ENCODE measurements at regions of chr7 and their contacts with region 1.

Region 1: DNA sequence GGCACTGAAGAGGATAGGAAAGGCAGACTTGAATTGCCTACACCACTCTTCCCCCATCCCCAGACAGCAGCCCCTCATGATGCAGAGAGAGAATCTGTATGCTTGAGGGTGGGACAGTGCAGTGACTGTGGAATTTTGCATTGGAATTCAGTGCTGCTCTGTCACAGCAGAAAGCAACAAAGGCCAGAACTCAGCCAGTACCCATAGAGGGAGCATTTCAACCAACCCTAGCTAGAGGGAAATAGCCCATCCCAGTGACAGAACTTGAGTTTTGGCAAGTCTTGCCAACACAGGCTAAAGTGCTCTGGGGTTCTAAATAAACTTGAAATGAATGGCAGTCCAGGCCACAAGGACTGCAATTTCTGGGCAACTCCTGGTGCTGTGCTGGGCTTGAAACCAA is 80.4 kb downstream of the TES start:
- DNase-seq: no peak
- ATAC-seq: no peak

Region 2: GRCh38 chr7:116218051-116218645 is 72.6 kb before region 1 on chr7:
- intact Hi-C with region 1: no loop called
- DNase-seq: no peak
- ATAC-seq: peak in 1 of 2 donors; percentile 26

Region 3: GRCh38 chr7:116236020-116236630 is 54.6 kb before region 1 on chr7:
- intact Hi-C with region 1: no loop called
- DNase-seq: peak; percentile 48
- ATAC-seq: peak; percentile 63

Region 4: GRCh38 chr7:116305485-116306408 is 15.0 kb after region 1 on chr7:
- intact Hi-C with region 1: loop called in 1 of 2 experiments (anchors 1 kb)
- DNase-seq: no peak
- ATAC-seq: peak in 1 of 2 donors; percentile 47

Region 5: DNA sequence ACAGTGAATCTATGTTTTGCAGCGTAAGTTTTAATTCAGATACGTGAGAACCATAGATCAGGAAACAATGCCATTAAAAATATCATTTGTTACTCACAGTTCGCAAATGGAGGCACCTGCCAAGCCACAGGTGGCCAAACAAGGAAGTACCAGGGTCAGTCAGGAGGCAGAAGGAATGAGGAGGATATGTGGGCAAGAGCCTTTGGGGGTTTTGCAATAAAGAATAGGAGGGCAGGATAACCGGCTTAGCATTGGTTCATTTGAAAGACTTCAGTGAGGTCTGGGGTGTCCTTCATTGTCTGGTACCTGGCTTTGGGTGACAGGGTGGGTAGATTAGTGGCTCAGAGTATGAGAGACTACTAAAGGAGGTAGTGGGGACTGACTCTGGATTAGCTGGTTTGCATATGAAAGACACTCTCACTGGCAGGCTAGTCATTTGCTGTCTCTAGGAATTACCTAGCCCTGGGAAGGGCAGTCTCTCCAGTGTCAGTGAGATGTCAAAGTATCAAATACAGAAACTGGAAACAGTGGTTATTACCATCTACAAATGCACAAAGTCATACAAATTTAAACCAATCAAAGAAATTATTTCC is 76.6 kb after region 1 on chr7:
- intact Hi-C with region 1: no loop called
- DNase-seq: no peak
- ATAC-seq: no peak